ENCODE measurements at regions of chr3 and their contacts with region 1.

Region 1: GRCh38 chr3:14329116-14329830 is 73.1 kb upstream of the SLC6A6 start:
- DNase-seq: peak; percentile 56
- ATAC-seq: peak; percentile 71
- H3K4me3 ChIP-seq: no peak overlapping the region
- H3K27ac ChIP-seq: no peak overlapping the region
- H3K4me1 ChIP-seq: no peaks in the 10 kb centered on the region; the same call in 1 of the 2 replicates
- H3K27me3 ChIP-seq: no peaks in the 10 kb centered on the region
- CTCF ChIP-seq: no peak
- POLR2A ChIP-seq: no peak
- RAD21 ChIP-seq: no peak

Region 2: GRCh38 chr3:14289590-14290461 is 39.4 kb before region 1 on chr3:
- CTCF ChIA-PET with region 1: interaction called, 4 read pairs
- POLR2A ChIA-PET with region 1: no interaction called
- dilution Hi-C with region 1: no loop called
- in situ Hi-C with region 1: no loop called
- intact Hi-C with region 1: loop called (anchors 1 kb)
- DNase-seq: peak; percentile 96
- ATAC-seq: peak; percentile 98
- H3K4me3 ChIP-seq: no peak overlapping the region
- H3K27ac ChIP-seq: no peak overlapping the region
- H3K4me1 ChIP-seq: peaks cover 8% of the 10 kb centered on the region; the same call in 1 of the 2 replicates
- H3K27me3 ChIP-seq: peaks cover 7% of the 10 kb centered on the region
- CTCF ChIP-seq: no peak
- POLR2A ChIP-seq: no peak
- RAD21 ChIP-seq: no peak

Measured in IMR-90 (cell line).